A673 (cell line): ENCODE measurements at regions of chr10 and their contacts with region 1.

Region 1: GRCh38 chr10:8053446-8054290 is 820 bp upstream of the GATA3 start:
- DNase-seq: peak; percentile 92
- H3K4me3 ChIP-seq: peak overlapping the region; percentile 55
- H3K27ac ChIP-seq: peak overlapping the region; percentile 22
- H3K4me1 ChIP-seq: peaks cover 22% of the 10 kb centered on the region
- H3K27me3 ChIP-seq: peaks cover 47% of the 10 kb centered on the region
- CTCF ChIP-seq: no peak

Region 2: GRCh38 chr10:7610651-7611389 is 442.8 kb before region 1 on chr10:
- CTCF ChIA-PET with region 1: no interaction called
- POLR2A ChIA-PET with region 1: no interaction called
- intact Hi-C with region 1: no loop called
- DNase-seq: peak; percentile 33
- H3K4me3 ChIP-seq: no peak overlapping the region
- H3K27ac ChIP-seq: no peak overlapping the region
- H3K4me1 ChIP-seq: peaks cover 10% of the 10 kb centered on the region
- H3K27me3 ChIP-seq: no peaks in the 10 kb centered on the region
- CTCF ChIP-seq: no peak

Region 3: DNA sequence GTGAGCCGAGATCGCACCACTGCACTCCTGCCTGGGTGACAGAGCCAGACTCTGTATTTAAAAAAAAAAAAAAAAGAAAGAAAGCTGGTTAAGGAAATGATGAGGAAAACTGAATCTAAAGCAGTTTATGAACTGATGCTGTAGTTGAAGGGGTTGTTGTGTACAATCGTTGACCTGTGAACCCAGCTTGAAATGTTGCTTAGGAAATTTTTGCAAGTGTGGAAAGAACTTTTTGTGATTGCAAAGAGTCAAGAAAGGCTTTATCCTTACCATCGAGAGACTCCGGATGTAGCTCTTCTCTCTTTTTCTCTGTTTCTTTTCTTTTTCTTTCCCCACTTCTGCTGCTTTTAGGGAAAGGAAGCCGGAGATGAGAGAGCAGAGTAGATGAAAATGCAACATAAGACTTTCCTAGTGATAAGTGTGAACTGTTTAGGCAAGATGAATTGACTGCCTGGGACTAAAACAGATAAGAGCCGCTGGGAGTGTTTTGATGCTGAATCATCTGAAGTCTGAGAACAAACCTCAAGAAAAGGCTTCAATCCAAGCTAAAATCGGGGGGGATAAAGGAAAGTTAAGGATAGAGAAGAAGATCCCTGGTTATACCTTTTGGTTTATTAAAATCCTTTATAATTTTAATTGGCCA is 166.4 kb before region 1 on chr10:
- CTCF ChIA-PET with region 1: interaction called, 11 read pairs
- POLR2A ChIA-PET with region 1: no interaction called
- intact Hi-C with region 1: no loop called
- DNase-seq: no peak
- H3K4me3 ChIP-seq: no peak overlapping the region
- H3K27ac ChIP-seq: no peak overlapping the region
- H3K4me1 ChIP-seq: no peaks in the 10 kb centered on the region
- H3K27me3 ChIP-seq: no peaks in the 10 kb centered on the region
- CTCF ChIP-seq: no peak

Region 4: GRCh38 chr10:8453587-8453986 is 399.9 kb after region 1 on chr10:
- CTCF ChIA-PET with region 1: no interaction called
- POLR2A ChIA-PET with region 1: no interaction called
- intact Hi-C with region 1: loop called (anchors 2 kb)
- DNase-seq: no peak
- H3K4me3 ChIP-seq: no peak overlapping the region
- H3K27ac ChIP-seq: no peak overlapping the region
- H3K4me1 ChIP-seq: peaks cover 6% of the 10 kb centered on the region
- H3K27me3 ChIP-seq: no peaks in the 10 kb centered on the region
- CTCF ChIP-seq: no peak

Region 5: GRCh38 chr10:8473205-8473604 is 419.5 kb after region 1 on chr10:
- CTCF ChIA-PET with region 1: no interaction called
- POLR2A ChIA-PET with region 1: no interaction called
- intact Hi-C with region 1: loop called (anchors 5 kb)
- DNase-seq: peak; percentile 27
- H3K4me3 ChIP-seq: no peak overlapping the region
- H3K27ac ChIP-seq: no peak overlapping the region
- H3K4me1 ChIP-seq: no peaks in the 10 kb centered on the region
- H3K27me3 ChIP-seq: no peaks in the 10 kb centered on the region
- CTCF ChIP-seq: peak; percentile 48; the same call in 1 of the 2 replicates

Region 6: DNA sequence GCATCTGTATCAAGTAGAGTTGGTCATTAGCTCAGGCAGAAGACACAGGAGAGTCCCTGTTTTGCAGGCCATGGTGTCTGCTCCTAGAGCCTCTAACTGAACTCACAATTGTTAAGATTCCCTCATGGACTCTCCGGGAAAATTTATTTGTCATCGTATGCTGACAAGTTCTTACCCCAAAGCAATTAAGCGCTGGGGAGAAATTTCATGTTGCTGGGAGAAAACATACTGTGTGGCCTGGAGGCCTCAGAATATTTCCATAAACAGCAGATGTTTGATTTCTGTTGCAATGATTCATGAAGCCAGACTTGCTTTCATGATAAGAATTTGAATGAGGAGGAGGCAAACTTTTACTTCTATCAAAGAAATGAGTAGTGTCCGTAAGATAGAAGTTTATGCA is 584.0 kb after region 1 on chr10:
- CTCF ChIA-PET with region 1: no interaction called
- POLR2A ChIA-PET with region 1: no interaction called
- intact Hi-C with region 1: no loop called
- DNase-seq: no peak
- H3K4me3 ChIP-seq: no peak overlapping the region
- H3K27ac ChIP-seq: no peak overlapping the region
- H3K4me1 ChIP-seq: no peaks in the 10 kb centered on the region
- H3K27me3 ChIP-seq: no peaks in the 10 kb centered on the region
- CTCF ChIP-seq: no peak

Region 7: GRCh38 chr10:9209105-9209798 is 1155.6 kb after region 1 on chr10:
- CTCF ChIA-PET with region 1: interaction called, 6 read pairs
- POLR2A ChIA-PET with region 1: no interaction called
- intact Hi-C with region 1: loop called (anchors 10 kb)
- DNase-seq: peak; percentile 70
- H3K4me3 ChIP-seq: no peak overlapping the region
- H3K27ac ChIP-seq: no peak overlapping the region
- H3K4me1 ChIP-seq: no peaks in the 10 kb centered on the region
- H3K27me3 ChIP-seq: no peaks in the 10 kb centered on the region
- CTCF ChIP-seq: peak; percentile 88